ENCODE measurements at regions of chr5 and their contacts with region 1.

Region 1: DNA sequence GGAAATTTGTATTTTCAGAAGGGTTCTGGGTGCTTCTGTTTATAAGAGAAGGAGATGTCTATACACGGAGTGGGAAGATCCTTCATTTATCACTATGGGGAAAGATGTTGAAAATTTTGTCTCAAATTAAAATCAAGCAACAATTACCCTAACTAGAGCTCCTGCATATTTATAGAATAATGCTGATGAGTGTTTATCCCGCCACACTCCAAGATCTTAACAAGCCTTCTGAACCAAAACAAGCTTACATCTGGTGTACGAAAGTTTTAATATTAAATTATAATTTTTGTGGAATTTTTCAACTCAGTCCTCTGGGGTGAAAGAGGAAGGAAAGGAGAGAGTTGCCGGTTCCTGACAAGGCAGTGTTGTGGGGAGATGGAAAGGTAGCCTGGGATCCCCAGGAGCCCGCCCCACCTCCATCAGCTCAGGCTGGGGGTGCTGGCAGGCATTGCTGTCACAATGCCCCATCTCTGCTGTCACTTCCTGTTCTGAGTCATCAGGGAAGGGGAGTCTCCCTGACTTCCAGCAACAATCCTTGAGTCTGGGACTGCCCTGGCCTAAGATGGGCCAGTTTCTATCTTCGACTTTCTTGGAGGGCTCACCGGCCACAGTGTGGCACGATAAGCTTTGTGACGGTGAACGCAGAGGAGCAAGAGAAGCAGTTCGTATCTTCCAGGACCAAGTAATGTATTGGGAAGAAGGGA is 64.5 kb downstream of the ERAP1 start:
- DNase-seq: peak; percentile 80

Region 2: DNA sequence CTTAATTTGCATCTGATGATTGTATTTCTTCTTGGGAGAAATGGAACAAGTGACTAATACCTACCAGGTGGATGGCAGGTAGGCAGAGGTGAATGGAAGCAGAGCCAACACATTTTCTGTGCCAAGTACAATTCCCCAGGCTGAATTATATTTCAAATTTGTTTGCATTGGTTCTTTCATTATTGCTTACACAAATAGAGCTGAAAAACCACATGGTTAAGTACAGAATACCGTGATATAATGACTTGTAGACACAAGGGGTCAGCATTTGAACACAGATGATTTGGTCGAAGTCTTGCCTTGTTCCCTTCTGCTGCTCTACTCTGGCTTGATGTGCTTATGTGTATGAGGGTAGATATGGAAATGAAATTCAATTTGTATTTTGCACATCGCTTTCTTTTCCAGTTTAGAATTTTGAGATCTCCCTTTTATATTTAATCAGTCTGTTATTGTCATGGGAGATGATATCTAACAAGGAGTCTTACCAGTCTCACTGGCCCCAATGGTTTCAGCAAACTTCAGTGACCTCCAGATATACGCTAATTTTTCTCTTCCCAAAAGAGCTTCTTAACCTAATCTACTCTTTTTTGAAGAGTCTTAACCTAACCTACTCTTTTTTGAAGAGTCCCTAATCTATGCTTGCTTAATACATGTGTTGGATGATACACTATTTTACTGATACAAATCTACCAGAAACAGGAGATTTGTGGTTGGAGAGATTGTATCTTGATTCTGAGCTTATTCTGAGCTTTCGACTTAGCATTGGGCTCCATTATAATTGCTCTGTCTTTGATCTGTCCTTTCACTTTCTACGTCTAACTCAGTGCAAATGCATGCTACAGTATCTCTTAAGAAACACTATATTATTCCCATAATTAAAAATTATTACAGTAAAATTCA is 398.3 kb before region 1 on chr5:
- intact Hi-C with region 1: loop called (anchors 10 kb)
- DNase-seq: no peak

Region 3: GRCh38 chr5:96662725-96663513 is 80.3 kb before region 1 on chr5:
- intact Hi-C with region 1: loop called (anchors 5 kb)
- DNase-seq: peak; percentile 98

Region 4: GRCh38 chr5:96692441-96692840 is 50.8 kb before region 1 on chr5:
- intact Hi-C with region 1: no loop called
- DNase-seq: no peak

Region 5: GRCh38 chr5:96702503-96703383 is 40.5 kb before region 1 on chr5:
- intact Hi-C with region 1: loop called (anchors 1 kb)
- DNase-seq: peak; percentile 96

Region 6: GRCh38 chr5:96807075-96807654 is 63.9 kb after region 1 on chr5:
- intact Hi-C with region 1: loop called (anchors 5 kb)
- DNase-seq: peak; percentile 92

Region 7: GRCh38 chr5:96829297-96829696 is 86.1 kb after region 1 on chr5:
- intact Hi-C with region 1: no loop called
- DNase-seq: no peak

Measured in cardiac septum (tissue), 1 donor.